WTC11 (cell line): ENCODE measurements at regions of chr5 and their contacts with region 1.

Region 1: DNA sequence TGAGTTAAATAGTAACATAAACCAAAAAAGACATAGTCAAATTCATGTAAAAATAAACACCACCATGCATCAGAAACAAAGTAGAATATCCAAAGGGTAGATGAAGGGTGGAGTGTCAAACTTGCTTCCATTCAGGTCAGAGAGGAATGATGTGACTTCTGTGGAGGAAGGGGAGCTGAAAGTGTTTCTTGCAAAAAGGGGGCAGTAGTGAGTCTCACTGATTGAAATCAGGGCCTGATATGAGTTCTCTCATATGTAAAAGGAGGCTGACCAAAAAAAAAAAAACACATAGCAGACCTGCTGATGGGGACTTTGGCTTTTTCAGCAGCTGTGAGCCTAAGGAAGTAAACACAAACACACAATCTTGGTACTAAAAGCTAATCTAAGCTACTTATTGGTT is 38.8 kb upstream of the RGMB start:
- DNase-seq: no peak
- ATAC-seq: peak; percentile 51; the same call in 1 of the 2 replicates
- H3K4me3 Mint-ChIP-seq: no peak overlapping the region
- H3K27ac Mint-ChIP-seq: no peak overlapping the region
- H3K4me1 Mint-ChIP-seq: peaks cover 6% of the 10 kb centered on the region
- H3K27me3 Mint-ChIP-seq: no peaks in the 10 kb centered on the region
- CTCF ChIP-seq: no peak

Region 2: DNA sequence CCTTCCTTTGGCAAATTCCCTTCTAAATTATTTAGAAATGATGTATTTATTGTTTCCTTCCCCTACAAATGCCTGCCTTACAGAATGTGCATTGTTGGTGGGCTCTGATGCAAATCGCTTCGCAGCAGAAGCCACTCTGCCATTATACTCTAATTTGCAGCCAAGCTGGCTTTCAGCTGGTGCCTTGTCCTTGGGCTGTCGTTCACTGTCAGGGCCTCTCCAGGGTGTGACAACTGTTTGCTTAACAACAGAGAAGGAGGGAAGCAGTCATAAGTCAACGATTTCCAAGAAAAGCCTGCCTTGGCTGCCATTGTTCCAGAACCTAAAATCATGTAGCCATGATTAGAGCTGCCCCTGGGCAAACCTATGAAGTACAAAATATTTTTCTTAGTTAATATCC is 221.3 kb before region 1 on chr5:
- CTCF ChIA-PET with region 1: no interaction called
- POLR2A ChIA-PET with region 1: no interaction called
- DNase-seq: peak; percentile 31
- ATAC-seq: peak; percentile 87
- H3K4me3 Mint-ChIP-seq: no peak overlapping the region
- H3K27ac Mint-ChIP-seq: peak overlapping the region; percentile 88
- H3K4me1 Mint-ChIP-seq: peaks cover 48% of the 10 kb centered on the region
- H3K27me3 Mint-ChIP-seq: no peaks in the 10 kb centered on the region; the same call in 1 of the 2 replicates
- CTCF ChIP-seq: no peak

Region 3: DNA sequence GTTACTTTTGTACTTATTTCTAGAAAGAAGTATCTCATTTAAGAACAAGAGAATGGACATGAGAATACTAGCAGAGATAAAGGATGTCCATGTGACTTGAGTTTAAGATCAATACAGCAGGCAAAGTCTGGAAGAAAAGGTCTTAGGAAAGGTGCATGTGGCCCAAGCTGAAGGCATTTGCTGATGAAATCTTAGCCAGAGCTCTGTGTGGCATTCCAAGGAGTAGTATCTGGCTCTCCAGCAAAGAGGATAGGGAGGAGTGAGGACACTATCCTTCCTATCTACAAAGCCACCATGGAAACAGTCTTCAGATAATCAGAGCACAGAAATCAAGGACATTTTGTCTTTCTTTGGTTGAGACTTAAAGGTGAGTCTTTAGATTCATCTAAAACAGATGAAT is 205.3 kb before region 1 on chr5:
- CTCF ChIA-PET with region 1: no interaction called
- POLR2A ChIA-PET with region 1: no interaction called
- DNase-seq: no peak
- ATAC-seq: no peak
- H3K4me3 Mint-ChIP-seq: no peak overlapping the region
- H3K27ac Mint-ChIP-seq: no peak overlapping the region
- H3K4me1 Mint-ChIP-seq: no peaks in the 10 kb centered on the region
- H3K27me3 Mint-ChIP-seq: no peaks in the 10 kb centered on the region
- CTCF ChIP-seq: no peak

Region 4: DNA sequence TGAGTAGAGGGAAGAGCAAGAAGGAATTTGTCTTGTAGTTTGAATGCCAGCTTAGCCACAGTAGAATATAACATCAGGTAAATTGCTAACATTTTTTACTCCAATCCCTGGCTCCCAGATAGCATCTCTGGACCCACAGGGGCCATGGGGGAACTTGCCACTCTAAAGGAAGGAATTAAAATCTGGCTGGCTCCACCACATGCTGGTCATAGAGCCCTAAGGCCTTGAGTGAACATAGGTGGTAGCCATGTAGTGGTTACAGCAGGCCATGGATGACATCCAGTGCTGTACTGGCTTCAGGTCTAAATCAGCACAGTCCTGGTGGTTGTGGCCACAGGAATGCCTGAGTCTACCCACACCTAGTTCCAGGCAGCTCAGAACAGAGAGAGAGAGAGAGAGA is 71.1 kb before region 1 on chr5:
- CTCF ChIA-PET with region 1: no interaction called
- POLR2A ChIA-PET with region 1: no interaction called
- DNase-seq: no peak
- ATAC-seq: no peak
- H3K4me3 Mint-ChIP-seq: no peak overlapping the region
- H3K27ac Mint-ChIP-seq: no peak overlapping the region; the same call in 1 of the 2 replicates
- H3K4me1 Mint-ChIP-seq: peaks cover 26% of the 10 kb centered on the region
- H3K27me3 Mint-ChIP-seq: no peaks in the 10 kb centered on the region; the same call in none of the 2 replicates
- CTCF ChIP-seq: no peak

Region 5: DNA sequence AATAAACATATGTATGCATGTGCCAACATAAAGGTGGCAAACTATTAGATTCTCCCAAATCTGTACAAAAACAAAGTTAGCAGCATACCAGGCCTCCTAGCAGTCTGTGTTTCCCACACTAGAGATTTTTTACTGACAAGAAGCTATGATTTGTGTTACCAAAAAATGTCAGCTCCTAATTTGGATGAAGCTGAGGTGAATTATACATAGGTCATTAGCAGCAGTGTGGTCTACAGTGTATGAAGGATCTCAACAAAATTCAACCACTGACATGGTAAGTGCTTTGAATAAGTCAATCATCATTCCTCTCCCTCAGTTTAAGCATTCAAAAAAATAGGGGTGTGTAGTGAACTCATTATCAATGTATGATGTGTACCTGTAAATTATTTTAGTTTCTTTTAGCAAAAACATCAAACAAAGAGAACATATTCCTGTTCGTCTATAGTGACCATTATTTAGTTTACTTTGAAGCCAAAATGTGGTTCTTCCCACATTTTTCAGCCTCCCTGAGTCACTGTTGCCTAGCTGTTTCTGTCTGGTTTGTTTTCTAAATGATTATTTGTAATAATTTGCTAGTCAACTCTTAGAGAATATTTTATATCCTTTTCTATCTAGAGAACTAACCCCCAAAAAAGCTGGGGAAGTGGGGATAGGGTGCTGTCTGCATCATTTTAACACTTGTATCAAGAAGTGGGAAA is 13.3 kb before region 1 on chr5:
- CTCF ChIA-PET with region 1: interaction called, 11 read pairs
- POLR2A ChIA-PET with region 1: no interaction called
- DNase-seq: no peak
- ATAC-seq: no peak
- H3K4me3 Mint-ChIP-seq: no peak overlapping the region
- H3K27ac Mint-ChIP-seq: no peak overlapping the region
- H3K4me1 Mint-ChIP-seq: peaks cover 3% of the 10 kb centered on the region; the same call in 1 of the 2 replicates
- H3K27me3 Mint-ChIP-seq: no peaks in the 10 kb centered on the region
- CTCF ChIP-seq: no peak